Activated CD4-positive, alpha-beta memory T cell treated with anti-CD3 and anti-CD28 coated beads, Interleukin-2, amount 10 ng/mL, durations not matched to agents 7 days and 5 days (primary cell): ENCODE measurements at regions of chr5 and their contacts with region 1.

Region 1: GRCh38 chr5:126422989-126423788 is at the start of gene GRAMD2B:
- DNase-seq: peak; percentile 74
- H3K4me3 Mint-ChIP-seq: peak within 1 kb of the TSS; percentile 85
- H3K27ac Mint-ChIP-seq: peak within 1 kb of the TSS; percentile 77
- H3K4me1 Mint-ChIP-seq: peaks cover 38% of the 10 kb centered on the region
- H3K27me3 Mint-ChIP-seq: no peaks in the 10 kb centered on the region
- total RNA-seq, gene GRAMD2B: 4.6 to 5.0 TPM

Region 2: GRCh38 chr5:125484742-125485641 is 938.2 kb before region 1 on chr5:
- CTCF ChIA-PET with region 1: no interaction called
- POLR2A ChIA-PET with region 1: no interaction called
- DNase-seq: no peak
- H3K4me3 Mint-ChIP-seq: no peak overlapping the region
- H3K27ac Mint-ChIP-seq: no peak overlapping the region
- H3K4me1 Mint-ChIP-seq: no peaks in the 10 kb centered on the region
- H3K27me3 Mint-ChIP-seq: no peaks in the 10 kb centered on the region

Region 3: GRCh38 chr5:126410623-126411022 is 12.6 kb before region 1 on chr5:
- CTCF ChIA-PET with region 1: no interaction called
- POLR2A ChIA-PET with region 1: no interaction called
- DNase-seq: no peak
- H3K4me3 Mint-ChIP-seq: no peak overlapping the region
- H3K27ac Mint-ChIP-seq: no peak overlapping the region
- H3K4me1 Mint-ChIP-seq: no peaks in the 10 kb centered on the region
- H3K27me3 Mint-ChIP-seq: peaks cover 44% of the 10 kb centered on the region

Region 4: GRCh38 chr5:126433701-126434100 is 10.5 kb after region 1 on chr5:
- CTCF ChIA-PET with region 1: interaction called, 3 read pairs
- POLR2A ChIA-PET with region 1: interaction called, 10 read pairs
- DNase-seq: no peak
- H3K4me3 Mint-ChIP-seq: no peak overlapping the region
- H3K27ac Mint-ChIP-seq: no peak overlapping the region
- H3K4me1 Mint-ChIP-seq: peaks cover 17% of the 10 kb centered on the region
- H3K27me3 Mint-ChIP-seq: no peaks in the 10 kb centered on the region

Region 5: GRCh38 chr5:126449751-126450271 is 26.6 kb after region 1 on chr5:
- CTCF ChIA-PET with region 1: interaction called, 11 read pairs
- POLR2A ChIA-PET with region 1: interaction called, 68 read pairs
- DNase-seq: peak; percentile 77
- H3K4me3 Mint-ChIP-seq: peak overlapping the region; percentile 75
- H3K27ac Mint-ChIP-seq: peak overlapping the region; percentile 99
- H3K4me1 Mint-ChIP-seq: peaks cover 66% of the 10 kb centered on the region
- H3K27me3 Mint-ChIP-seq: no peaks in the 10 kb centered on the region

Region 6: DNA sequence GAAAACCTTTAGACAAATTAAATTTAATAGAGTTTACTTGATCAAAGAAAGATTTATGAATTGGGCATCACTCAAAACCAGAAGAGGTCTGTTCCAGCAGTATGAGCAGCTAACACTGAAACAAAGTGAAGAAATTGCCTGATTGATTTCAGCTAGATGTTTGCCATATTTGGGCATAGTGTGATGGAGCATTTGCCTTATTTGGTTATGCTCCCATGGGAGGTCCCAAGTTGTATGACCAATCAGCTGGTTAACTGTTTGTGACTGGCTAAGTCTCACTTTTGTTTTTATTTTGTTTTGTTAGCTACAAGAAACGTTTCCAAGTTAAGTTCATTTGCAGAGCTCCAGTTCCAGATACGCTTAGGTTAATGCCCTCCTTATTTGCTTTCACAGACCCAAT is 300.5 kb after region 1 on chr5:
- CTCF ChIA-PET with region 1: no interaction called
- POLR2A ChIA-PET with region 1: no interaction called
- DNase-seq: no peak
- H3K4me3 Mint-ChIP-seq: no peak overlapping the region
- H3K27ac Mint-ChIP-seq: no peak overlapping the region
- H3K4me1 Mint-ChIP-seq: no peaks in the 10 kb centered on the region
- H3K27me3 Mint-ChIP-seq: peaks cover 1% of the 10 kb centered on the region